Left ventricle myocardium superior (tissue), 1 donor: ENCODE measurements at regions of chr17 and their contacts with region 1.

Region 1: GRCh38 chr17:4625181-4625617 is 16.3 kb downstream of the ALOX15 start:
- DNase-seq: no peak
- ATAC-seq: peak; percentile 62

Region 2: DNA sequence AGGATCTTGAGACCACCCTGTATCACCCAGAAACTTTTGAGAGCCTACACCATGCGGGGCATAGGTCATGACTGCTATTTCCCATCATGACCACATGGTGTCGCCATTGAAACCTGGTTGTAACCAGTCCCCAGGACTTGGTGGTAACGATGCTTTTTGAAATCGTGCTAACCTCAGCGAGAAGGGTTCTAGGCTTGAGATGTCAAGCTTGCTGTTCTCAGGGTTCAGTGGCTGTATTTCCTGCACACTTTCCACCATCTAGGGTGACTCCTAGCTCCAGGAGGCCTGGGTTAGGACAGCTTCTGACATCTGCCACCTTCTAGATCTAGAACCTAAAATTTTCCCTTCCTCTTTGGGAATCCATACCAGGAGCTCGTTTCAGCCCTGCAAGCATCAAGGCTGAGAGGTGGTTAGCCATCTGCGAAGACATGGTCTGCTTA is 204.5 kb before region 1 on chr17:
- intact Hi-C with region 1: loop called (anchors 5 kb)
- DNase-seq: no peak
- ATAC-seq: peak; percentile 89

Region 3: DNA sequence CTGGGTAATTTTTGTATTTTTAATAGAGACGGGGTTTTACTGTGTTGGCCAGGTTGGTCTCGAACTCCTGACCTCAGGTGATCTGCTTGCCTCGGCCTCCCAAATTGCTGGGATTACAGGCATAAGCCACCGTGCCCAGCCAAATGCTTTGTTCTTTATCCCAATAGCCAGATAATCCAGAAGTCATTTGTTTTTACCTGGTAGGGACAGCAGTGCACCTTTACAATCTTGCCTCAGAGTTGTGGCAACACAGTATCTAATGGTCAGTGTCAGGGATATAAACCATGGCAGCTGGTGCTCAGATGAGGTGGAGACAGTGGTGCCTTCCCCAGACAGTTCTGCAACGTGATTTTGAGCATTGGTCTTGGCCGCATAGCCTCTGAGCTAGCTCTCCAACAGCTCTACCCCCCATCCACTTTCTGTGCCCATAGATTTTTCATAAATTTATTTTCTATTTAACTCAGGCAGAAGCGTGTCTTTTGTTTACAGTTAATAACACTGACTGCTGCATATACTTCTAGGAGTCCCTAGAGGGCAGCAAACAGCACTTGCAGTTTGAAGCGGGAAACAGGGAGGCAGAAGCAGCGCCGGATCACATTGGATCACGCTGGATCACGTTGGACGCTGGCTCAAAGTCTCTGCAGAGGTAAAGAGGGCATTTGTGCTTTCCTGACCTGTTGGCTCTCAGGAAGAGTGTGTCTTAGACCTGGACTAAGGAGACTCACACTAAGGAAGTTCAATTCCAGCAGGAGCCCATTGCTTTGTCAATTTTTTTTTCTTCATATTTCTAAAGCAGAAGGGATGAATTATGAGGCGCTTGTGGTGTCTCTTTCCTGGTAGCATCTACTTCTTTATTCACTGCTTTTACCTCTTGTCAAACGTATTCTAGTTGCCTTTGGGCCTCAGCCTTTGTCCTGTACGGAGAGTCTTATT is 59.7 kb before region 1 on chr17:
- intact Hi-C with region 1: loop called (anchors 2 kb)
- DNase-seq: peak; percentile 72
- ATAC-seq: peak; percentile 87

Region 4: GRCh38 chr17:4709794-4710692 is 84.8 kb after region 1 on chr17 and contains the start of gene ARRB2:
- intact Hi-C with region 1: no loop called
- DNase-seq: peak; percentile 99
- ATAC-seq: peak; percentile 93
- total RNA-seq, gene ARRB2: 35.0 TPM

Region 5: DNA sequence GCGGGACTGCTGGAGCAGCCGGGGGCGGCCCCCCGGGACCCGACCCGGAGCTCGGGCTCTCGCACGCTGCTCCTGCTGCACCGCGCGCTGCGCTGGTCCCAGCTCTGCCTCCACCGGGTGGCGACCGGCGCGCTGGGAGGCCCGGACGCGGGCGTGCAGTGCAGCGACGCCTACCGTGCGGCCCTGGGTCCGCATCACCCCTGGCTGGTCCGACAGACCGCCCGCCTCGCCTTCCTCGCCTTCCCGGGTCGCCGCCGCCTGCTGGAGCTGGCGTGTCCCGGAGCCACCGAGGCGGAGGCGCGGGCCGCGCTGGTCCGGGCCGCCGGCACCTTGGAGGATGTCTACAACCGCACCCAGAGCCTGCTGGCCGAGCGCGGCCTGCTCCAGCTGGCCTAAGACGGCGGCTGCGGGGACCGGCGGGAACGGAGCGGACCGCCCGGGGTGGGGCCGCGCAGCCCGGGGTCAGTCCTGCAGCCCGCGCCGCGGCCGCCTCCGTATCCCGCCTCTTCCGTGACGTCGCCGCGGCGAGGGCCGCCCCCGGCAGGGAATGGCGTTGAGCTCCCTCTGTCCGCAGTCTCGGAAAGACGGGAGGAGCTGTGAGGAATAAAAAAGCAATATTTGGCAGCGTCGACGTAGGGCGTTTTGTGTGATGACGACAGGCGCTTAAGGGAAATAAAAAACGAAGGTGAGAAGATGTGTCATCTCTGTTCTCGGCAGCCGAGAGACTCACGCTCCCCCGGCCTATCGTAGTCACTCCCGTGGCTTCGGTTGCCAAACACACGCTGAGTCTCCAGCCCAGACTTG is 164.9 kb after region 1 on chr17:
- intact Hi-C with region 1: no loop called
- DNase-seq: peak; percentile 93
- ATAC-seq: peak; percentile 95